ENCODE measurements at regions of chr17 and their contacts with region 1.

Region 1: DNA sequence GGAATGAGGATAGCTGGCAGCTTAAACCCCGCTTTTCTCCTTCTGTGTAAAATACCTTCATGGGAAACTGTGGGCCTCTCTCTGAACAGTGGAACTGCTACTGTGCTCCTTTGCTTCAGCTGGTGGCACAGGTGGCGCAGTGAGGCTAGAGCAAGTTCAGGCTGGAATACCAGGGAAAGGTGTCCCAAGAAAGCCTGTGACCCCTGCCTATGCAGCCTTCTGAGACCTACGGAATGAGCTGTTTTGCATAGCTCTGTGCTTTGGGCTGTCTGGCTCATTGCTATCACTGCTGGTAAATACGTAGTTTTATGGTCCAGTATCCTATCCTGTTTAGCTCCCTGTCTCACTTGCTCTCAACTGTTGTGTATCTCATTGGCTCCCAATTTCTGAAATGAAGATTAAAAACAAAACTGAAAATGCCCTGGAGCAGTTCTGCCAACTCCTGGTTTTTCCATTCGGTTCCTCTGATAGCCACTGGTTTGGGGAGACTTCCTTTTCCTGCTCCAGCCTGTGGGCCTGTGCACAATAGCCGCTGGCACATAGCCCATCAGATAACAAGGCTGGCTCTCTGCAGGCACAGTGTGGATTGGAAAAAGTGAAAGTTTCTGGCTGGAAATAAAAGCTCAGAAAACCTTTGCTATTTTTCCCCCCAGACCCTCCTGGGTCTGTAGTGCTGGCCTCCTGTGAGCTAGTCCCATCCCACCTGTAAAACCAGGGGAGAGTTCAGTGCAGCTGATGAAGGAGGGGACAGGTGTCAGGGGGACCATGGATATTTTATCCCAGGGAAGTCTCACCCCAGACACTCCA is 24.1 kb downstream of the LIMD2 start:
- DNase-seq: no peak
- ATAC-seq: no peak
- H3K4me3 ChIP-seq: no peak overlapping the region
- H3K27ac ChIP-seq: no peak overlapping the region
- H3K4me1 ChIP-seq: no peaks in the 10 kb centered on the region
- H3K27me3 ChIP-seq: no peaks in the 10 kb centered on the region
- CTCF ChIP-seq: no peak
- EP300 ChIP-seq: no peak
- POLR2A ChIP-seq: no peak
- RAD21 ChIP-seq: no peak

Region 2: DNA sequence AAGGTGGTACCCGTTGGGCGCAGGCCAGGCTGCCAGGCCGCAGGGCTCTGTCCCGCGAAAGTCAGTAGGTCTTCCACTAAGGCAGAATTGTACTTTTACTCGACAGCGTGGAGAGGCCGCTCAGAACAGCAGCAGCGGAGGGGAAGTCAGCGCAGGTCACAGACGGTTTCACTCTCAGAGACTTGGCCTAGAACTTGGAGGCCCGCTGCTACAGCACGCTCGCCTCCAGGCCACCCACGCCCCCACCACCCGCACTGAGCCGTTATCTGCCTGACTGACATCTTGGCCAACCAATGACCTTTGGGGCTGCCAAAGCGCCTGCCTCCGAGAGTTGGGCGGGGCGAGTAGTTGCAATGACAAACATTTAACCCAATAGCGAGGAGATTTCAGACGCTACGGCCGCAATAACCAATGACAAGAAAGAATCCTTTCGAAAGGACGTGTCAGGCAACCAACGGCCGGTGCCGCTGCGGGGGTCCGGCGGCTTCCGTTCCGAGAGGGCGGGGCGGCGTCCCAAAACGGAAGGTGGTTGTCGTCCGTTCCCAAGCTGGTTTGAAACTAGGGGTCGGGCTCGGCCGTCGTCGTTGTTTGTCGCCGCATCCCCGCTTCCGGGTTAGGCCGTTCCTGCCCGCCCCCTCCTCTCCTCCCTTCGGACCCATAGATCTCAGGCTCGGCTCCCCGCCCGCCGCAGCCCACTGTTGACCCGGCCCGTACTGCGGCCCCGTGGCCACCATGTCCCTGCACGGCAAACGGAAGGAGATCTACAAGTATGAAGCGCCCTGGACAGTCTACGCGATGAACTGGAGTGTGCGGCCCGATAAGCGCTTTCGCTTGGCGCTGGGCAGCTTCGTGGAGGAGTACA is 125.6 kb before region 1 on chr17 and contains the start of gene DCAF7:
- CTCF ChIA-PET with region 1: no interaction called
- POLR2A ChIA-PET with region 1: no interaction called
- RAD21 ChIA-PET with region 1: no interaction called
- SMC1A ChIA-PET with region 1: no interaction called
- in situ Hi-C with region 1: no loop called
- intact Hi-C with region 1: no loop called
- DNase-seq: peak; percentile 99
- ATAC-seq: peak; percentile 94
- H3K4me3 ChIP-seq: peak within 1 kb of the TSS; percentile 99
- H3K27ac ChIP-seq: peak within 1 kb of the TSS; percentile 96
- H3K4me1 ChIP-seq: peaks cover 15% of the 10 kb centered on the region
- H3K27me3 ChIP-seq: no peaks in the 10 kb centered on the region
- CTCF ChIP-seq: no peak
- EP300 ChIP-seq: 0 out of 4 replicates have a peak, but pooled peaks of 1 of the 2 experiments have one; percentile 23
- POLR2A ChIP-seq: peak; percentile 86
- RAD21 ChIP-seq: no peak
- polyA plus RNA-seq, gene DCAF7: 27.0 to 27.4 TPM

Region 3: GRCh38 chr17:63665527-63666214 is 10.1 kb before region 1 on chr17:
- CTCF ChIA-PET with region 1: interaction called, 6 read pairs
- POLR2A ChIA-PET with region 1: interaction called, 3 read pairs
- RAD21 ChIA-PET with region 1: interaction called, 8 read pairs
- SMC1A ChIA-PET with region 1: interaction called, 18 read pairs
- in situ Hi-C with region 1: no loop called
- intact Hi-C with region 1: no loop called
- DNase-seq: peak; percentile 27
- ATAC-seq: peak; percentile 52
- H3K4me3 ChIP-seq: no peak overlapping the region
- H3K27ac ChIP-seq: peak overlapping the region; percentile 37
- H3K4me1 ChIP-seq: peaks cover 7% of the 10 kb centered on the region
- H3K27me3 ChIP-seq: no peaks in the 10 kb centered on the region
- CTCF ChIP-seq: no peak
- EP300 ChIP-seq: no peak
- POLR2A ChIP-seq: no peak
- RAD21 ChIP-seq: no peak

Region 4: GRCh38 chr17:63735691-63736090 is 59.9 kb after region 1 on chr17:
- CTCF ChIA-PET with region 1: no interaction called
- POLR2A ChIA-PET with region 1: no interaction called
- RAD21 ChIA-PET with region 1: no interaction called
- SMC1A ChIA-PET with region 1: no interaction called
- in situ Hi-C with region 1: no loop called
- intact Hi-C with region 1: no loop called
- DNase-seq: no peak
- ATAC-seq: no peak
- H3K4me3 ChIP-seq: no peak overlapping the region
- H3K27ac ChIP-seq: no peak overlapping the region
- H3K4me1 ChIP-seq: no peaks in the 10 kb centered on the region
- H3K27me3 ChIP-seq: no peaks in the 10 kb centered on the region
- CTCF ChIP-seq: no peak
- EP300 ChIP-seq: no peak
- POLR2A ChIP-seq: no peak
- RAD21 ChIP-seq: no peak

Region 5: DNA sequence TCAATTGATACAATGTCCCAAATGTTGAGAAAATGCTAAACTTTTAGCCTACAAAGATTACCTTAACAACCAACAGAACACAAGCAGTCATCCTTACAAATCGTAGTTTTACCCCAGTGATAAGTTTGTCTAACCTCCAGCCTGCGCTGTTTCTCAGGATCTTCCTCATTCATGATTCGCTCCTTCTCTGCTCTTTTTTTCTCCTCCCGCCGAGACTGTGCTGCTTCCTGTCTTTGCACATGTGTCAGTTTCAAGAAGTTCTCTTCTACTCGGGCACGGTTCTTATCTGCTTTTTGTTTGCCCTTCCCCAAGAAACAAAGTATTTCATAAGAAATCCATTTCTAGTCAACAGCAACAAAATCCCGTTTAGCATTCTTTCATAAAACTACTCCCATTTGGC is 76.0 kb after region 1 on chr17:
- CTCF ChIA-PET with region 1: no interaction called
- POLR2A ChIA-PET with region 1: no interaction called
- RAD21 ChIA-PET with region 1: no interaction called
- SMC1A ChIA-PET with region 1: no interaction called
- in situ Hi-C with region 1: no loop called
- intact Hi-C with region 1: no loop called
- DNase-seq: no peak
- ATAC-seq: 0 out of 3 replicates have a peak, but pooled peaks have one; percentile 21
- H3K4me3 ChIP-seq: no peak overlapping the region
- H3K27ac ChIP-seq: peak overlapping the region; percentile 58
- H3K4me1 ChIP-seq: peaks cover 4% of the 10 kb centered on the region; the same call in 1 of the 2 replicates
- H3K27me3 ChIP-seq: no peaks in the 10 kb centered on the region
- CTCF ChIP-seq: no peak
- EP300 ChIP-seq: no peak
- POLR2A ChIP-seq: no peak
- RAD21 ChIP-seq: no peak

Measured in GM12878 (cell line).